ENCODE measurements at regions of chr17 and their contacts with region 1.

Region 1: DNA sequence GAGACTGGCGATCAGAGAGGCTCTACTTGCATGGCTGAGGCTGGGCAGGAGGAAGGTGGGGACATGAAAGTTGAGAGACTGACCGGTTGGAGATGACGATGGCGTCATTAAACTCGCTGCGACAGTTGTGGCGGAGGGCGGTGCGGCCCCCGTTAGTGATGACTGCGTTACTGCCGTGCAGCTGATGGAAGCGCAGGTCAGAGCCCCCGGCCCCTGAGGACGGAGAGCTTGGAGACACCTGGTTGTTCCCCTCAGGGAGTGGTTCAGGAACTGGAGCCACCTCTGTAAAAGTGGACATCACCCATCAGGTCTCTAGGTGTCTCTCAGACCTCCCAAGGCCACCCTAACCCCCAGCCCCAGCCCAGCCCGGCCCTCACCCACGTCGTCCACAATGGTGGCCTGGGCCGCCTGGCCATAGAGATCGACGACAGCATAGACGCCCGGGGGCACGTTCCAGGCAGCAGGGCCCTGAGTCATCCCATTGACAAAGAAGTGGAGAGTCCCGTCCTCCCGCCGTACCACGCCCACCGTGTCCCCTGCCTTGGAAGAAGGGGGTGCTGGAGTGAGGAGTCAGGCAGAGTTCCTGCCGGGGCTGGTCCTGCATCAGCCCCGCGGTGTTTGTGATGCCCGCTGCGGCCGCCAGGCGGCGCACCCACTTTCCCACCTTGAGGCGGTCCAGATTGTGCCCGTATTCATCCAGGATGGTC is 5.3 kb downstream of the NEURL4 start:
- DNase-seq: peak; percentile 75
- H3K4me3 Mint-ChIP-seq: no peak overlapping the region
- H3K27ac Mint-ChIP-seq: peak overlapping the region; percentile 23
- H3K4me1 Mint-ChIP-seq: peaks cover 20% of the 10 kb centered on the region
- H3K27me3 Mint-ChIP-seq: no peaks in the 10 kb centered on the region

Region 2: DNA sequence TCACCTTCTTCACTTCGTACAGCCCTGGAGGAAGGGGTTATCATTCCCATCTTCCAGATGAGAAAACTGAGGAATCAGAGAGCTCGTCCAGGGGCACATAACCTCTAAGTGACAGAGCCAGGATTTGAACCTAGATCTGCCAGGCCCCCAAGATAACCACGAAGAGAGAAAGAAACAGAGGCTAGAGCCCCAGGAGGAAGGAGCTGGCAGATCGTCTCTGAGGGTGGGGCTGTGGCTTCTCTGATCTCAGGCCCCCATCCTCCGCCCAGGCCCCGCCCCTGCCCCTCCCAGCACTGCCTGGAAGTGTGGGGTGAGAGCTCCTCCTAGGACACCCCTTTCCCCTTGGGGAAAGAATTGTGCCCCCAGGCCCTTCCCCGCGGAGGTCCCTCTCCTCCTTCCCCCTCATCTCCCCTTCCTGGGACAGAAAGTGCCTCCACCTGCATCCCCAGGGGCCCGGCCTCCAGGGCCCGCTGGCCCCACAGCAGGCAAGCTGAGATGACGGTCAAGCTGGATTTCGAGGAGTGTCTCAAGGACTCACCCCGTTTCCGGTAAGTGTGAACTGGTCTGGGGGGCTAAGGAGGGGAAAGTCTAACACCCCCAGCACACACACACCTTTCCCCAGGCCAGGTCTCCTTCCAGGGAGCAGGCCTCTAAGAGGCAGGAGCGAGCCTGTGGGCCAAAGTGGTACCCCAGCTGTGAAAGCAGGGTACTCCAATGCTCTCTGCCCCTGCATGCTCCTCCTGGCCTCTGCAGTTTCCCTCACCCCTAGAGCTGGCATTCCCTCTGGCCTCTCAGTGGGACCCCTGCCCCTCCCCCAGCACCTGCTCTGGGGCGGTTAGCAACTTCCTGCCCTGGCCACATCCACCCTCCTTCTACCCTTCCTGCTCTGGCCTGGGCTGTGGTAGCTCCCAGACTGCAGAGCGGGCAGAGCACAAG is 12.6 kb after region 1 on chr17 and contains the start of gene ACAP1:
- CTCF ChIA-PET with region 1: interaction called, 25 read pairs
- POLR2A ChIA-PET with region 1: interaction called, 4 read pairs
- intact Hi-C with region 1: no loop called
- DNase-seq: peak; percentile 93
- H3K4me3 Mint-ChIP-seq: peak within 1 kb of the TSS; percentile 91
- H3K27ac Mint-ChIP-seq: peak within 1 kb of the TSS; percentile 98
- H3K4me1 Mint-ChIP-seq: peaks cover 51% of the 10 kb centered on the region
- H3K27me3 Mint-ChIP-seq: no peaks in the 10 kb centered on the region
- total RNA-seq, gene ACAP1: 391 to 405 TPM

Region 3: GRCh38 chr17:7344399-7344798 is 20.5 kb after region 1 on chr17:
- CTCF ChIA-PET with region 1: interaction called, 10 read pairs
- POLR2A ChIA-PET with region 1: interaction called, 3 read pairs
- intact Hi-C with region 1: loop called (anchors 1 kb)
- DNase-seq: no peak
- H3K4me3 Mint-ChIP-seq: no peak overlapping the region
- H3K27ac Mint-ChIP-seq: no peak overlapping the region
- H3K4me1 Mint-ChIP-seq: peaks cover 11% of the 10 kb centered on the region
- H3K27me3 Mint-ChIP-seq: no peaks in the 10 kb centered on the region

Region 4: GRCh38 chr17:8455665-8456209 is 1131.9 kb after region 1 on chr17:
- CTCF ChIA-PET with region 1: no interaction called
- POLR2A ChIA-PET with region 1: no interaction called
- intact Hi-C with region 1: no loop called
- DNase-seq: no peak
- H3K4me3 Mint-ChIP-seq: no peak overlapping the region
- H3K27ac Mint-ChIP-seq: peak overlapping the region; percentile 6
- H3K4me1 Mint-ChIP-seq: peaks cover 15% of the 10 kb centered on the region
- H3K27me3 Mint-ChIP-seq: no peaks in the 10 kb centered on the region